GM12878 (cell line): ENCODE measurements at regions of chr7 and their contacts with region 1.

Region 1: DNA sequence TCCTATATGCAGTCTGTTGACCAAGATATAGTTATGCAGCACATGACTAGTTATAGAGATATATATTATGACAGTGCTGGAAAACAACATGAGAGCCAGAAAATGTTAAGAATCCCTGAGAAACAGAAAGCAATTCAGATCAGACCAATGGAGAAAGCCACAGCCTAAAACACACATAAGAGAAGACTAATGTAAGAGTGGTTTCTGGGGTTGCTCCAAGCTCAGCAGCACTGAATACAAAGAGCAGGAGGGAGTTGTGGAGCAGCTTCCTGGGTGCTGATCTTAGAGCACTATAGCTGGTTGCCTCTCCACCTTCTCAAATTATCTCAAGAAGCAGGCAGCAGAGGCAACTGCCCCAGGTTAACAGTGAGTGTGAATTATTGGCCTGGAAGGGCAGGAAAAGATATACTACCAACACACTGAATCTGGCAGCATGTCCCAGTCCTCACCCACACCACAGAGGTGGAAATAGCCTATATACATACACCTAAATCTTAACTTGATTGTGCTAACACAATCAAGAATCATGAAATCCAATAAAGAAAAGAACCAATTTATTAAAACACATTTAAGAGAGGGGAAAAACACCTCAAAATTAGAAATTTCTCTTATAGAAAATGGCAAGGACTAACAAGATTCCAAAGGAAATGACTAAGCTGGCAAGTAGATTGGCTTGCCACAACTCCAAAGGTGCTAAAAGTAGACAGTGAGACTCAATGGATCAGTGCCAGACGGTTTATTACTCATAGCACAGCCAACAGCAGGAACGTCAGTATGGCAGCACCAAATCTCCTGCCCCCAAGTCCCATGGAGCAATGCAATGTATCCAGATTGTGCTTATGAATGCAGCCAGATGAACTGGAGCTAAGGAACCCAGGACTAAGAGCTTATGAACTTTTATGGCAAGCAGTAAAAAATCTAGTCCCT is 5.1 kb downstream of the PTTG1IP2 start:
- DNase-seq: no peak
- ATAC-seq: no peak
- H3K4me3 ChIP-seq: no peak overlapping the region
- H3K27ac ChIP-seq: no peak overlapping the region
- H3K4me1 ChIP-seq: no peaks in the 10 kb centered on the region
- H3K27me3 ChIP-seq: no peaks in the 10 kb centered on the region
- CTCF ChIP-seq: no peak
- EP300 ChIP-seq: no peak
- POLR2A ChIP-seq: no peak
- RAD21 ChIP-seq: no peak

Region 2: DNA sequence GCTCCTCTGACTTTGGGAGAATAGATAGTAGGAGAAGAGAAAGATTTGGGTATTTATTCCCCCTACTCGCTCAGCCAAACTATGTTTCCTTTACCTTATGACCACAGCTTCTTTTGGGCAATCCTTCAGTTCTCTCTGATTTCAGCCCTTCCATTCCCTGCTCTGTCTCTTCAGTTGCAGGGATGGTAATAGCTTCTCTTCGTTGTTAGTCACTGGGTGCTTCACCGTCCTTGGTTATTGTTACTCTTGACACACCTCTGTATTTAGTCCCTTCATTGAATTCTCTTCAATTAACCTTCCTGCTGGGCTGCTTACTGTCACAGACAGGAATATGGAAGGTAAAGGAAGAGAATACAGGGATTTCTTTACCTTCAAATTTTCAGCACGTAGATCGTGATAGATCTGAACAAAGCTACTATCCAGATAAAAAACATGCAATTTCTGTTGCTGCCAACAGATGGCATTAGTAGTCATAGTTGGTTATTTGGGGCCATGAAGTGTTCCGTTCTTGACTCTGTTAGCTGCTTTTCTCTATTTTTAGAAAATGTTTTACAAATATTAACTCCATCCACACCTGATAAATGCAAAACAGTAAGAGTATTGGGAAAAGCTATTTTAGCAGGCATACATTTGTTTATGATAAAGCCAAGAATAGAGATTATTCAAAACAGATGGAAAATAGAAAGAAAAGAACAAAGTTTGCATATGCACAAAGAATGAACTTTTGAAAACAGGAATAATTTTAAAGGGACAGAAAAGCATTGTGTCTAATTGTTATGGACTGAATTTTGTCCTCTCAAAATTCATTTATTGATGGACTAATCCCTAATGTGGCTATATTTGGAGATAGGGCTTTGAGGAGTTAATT is 19.1 kb before region 1 on chr7:
- CTCF ChIA-PET with region 1: interaction called, 23 read pairs
- POLR2A ChIA-PET with region 1: no interaction called
- RAD21 ChIA-PET with region 1: interaction called, 4 read pairs
- SMC1A ChIA-PET with region 1: interaction called, 3 read pairs
- in situ Hi-C with region 1: no loop called
- intact Hi-C with region 1: no loop called
- DNase-seq: peak; percentile 7
- ATAC-seq: peak; percentile 93
- H3K4me3 ChIP-seq: no peak overlapping the region
- H3K27ac ChIP-seq: no peak overlapping the region
- H3K4me1 ChIP-seq: no peaks in the 10 kb centered on the region
- H3K27me3 ChIP-seq: no peaks in the 10 kb centered on the region
- CTCF ChIP-seq: peak; percentile 61 to 76 (median 63); a peak in 5 of 6 replicates
- EP300 ChIP-seq: no peak
- POLR2A ChIP-seq: no peak
- RAD21 ChIP-seq: peak; percentile 79